ENCODE measurements at regions of chr15 and their contacts with region 1.

Region 1: GRCh38 chr15:26759986-26760385 is 12.9 kb downstream of the GABRB3 start:
- DNase-seq: no peak
- ATAC-seq: no peak
- H3K4me3 ChIP-seq: no peak overlapping the region
- H3K27ac ChIP-seq: no peak overlapping the region
- H3K4me1 ChIP-seq: no peaks in the 10 kb centered on the region
- H3K27me3 ChIP-seq: peaks cover 0 to 8% (median 0%) of the 10 kb centered on the region in 7 donors
- CTCF ChIP-seq: no peak

Region 2: DNA sequence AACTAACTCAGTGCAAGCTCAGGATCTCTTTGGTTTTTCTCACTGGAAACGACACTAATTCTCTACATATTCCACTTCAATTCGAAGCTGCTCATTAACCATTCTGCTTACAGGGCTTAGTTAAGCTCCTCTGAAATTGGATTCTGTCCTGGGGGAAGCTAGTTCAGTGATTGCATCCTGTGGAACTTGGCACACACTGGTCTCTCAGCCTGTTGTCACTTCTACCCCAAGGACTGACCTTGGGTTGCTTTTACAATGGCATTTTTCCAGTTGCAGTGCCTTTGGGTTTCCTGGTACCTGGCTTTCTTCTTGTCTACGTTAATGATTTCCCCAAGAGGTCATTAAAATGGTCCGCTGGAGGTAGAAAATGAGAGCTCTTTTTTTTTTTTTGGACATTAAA is 46.2 kb after region 1 on chr15:
- intact Hi-C with region 1: loop called in 1 of 10 experiments (anchors 10 kb)
- DNase-seq: peak in 1 of 2 donors; percentile 29
- ATAC-seq: peak in 7 of 8 donors; percentile 58 to 96 (median 84)
- H3K4me3 ChIP-seq: no peak overlapping the region
- H3K27ac ChIP-seq: no peak overlapping the region
- H3K4me1 ChIP-seq: peaks cover 0 to 18% (median 0%) of the 10 kb centered on the region in 9 donors
- H3K27me3 ChIP-seq: no peaks in the 10 kb centered on the region
- CTCF ChIP-seq: no peak